Activated CD4-positive, alpha-beta memory T cell treated with anti-CD3 and anti-CD28 coated beads, Interleukin-2, amount 10 ng/mL, durations not matched to agents 7 days and 5 days (primary cell): ENCODE measurements at regions of chrX and their contacts with region 1.

Region 1: DNA sequence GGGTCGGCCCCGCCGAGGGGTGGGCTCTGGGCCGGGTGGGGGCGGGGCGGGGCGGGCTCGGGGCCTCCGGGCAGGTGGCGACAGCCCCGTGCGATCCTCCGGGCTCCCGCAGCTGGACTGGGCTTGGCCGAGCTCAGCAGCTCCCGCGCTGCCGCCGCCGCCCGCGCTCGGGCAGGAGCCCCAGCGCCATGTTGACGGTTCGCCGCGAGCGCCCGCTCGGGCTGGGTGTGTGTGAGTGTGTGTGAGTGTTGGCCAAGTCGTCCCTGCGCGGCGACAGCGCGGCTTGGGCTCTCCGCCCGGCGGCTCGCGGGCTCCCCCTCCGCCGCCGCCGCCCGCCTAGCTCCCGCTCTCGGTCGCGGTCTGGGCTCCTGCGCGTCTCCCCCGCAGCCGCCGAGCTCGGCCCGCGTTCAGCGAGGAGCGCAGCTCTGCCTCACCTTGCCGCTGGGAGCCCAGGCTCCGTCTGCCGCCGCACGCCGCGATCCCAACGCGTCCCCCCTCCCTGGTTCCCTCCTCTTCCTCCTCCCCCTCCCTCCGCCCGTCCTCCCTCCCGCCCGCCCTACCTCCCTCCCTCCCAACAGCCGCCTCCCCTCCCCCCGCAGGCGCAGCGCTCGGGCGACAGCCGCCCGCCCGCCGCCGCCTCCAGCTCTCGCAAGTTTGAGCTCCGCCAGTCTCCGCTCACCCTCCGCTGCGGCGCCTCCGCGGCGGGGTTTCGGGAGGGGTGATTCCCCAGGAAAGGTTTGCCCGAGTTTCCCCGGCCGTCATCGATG is at the start of gene BCOR:
- DNase-seq: peak; percentile 81
- H3K4me3 Mint-ChIP-seq: peak within 1 kb of the TSS; percentile 92
- H3K27ac Mint-ChIP-seq: peak within 1 kb of the TSS; percentile 90
- H3K4me1 Mint-ChIP-seq: peaks cover 22% of the 10 kb centered on the region
- H3K27me3 Mint-ChIP-seq: no peaks in the 10 kb centered on the region
- total RNA-seq, gene BCOR: 46.6 to 46.8 TPM

Region 2: DNA sequence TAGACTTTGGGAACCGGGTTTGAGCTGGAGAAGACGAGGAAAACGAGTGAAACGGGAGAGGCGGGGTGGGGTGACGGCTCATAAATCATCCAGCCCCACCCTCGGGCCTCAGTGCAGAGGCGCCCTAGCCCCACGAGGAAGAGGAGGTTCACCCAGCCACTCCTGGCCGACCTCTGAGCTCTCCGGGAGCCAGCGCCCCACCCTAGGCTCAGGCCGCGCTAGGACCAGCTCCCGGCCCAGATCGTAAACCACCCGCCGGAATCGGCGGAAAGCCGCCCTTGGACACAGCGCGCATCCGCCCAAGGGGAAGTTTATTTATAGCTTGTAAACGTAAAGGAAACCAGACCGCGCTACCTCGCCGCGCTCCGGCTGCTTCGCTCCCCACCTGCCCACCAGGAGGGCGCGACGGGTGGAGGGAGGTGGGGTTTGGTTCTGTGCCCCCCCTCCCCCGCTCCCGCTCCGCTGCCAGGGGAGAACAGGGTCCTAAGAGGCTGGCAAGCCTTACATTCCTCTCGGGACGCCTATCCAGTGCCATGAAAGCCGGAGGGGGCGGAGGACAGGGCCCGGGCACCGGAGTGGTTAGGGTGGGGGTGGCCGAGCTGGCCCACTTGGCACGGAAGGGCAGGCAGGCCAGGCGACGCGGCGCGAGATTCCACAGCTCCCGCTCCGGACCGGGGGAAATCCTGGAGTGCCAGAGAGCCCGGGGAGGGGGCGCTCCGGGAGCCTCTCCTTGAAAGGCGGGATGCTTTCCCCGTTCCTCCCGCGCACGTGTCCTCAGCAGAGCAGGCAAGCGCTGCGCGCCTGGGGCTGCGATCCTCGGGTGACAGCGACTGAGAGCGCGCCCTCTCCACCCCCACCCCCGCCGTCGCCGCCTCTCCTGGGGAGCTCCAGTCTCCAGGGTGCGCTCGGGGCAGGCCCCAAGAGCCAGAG is 84.1 kb before region 1 on chrX:
- CTCF ChIA-PET with region 1: interaction called, 3 read pairs
- POLR2A ChIA-PET with region 1: interaction called, 22 read pairs
- DNase-seq: peak; percentile 60
- H3K4me3 Mint-ChIP-seq: peak overlapping the region; percentile 73
- H3K27ac Mint-ChIP-seq: peak overlapping the region; percentile 64
- H3K4me1 Mint-ChIP-seq: peaks cover 31% of the 10 kb centered on the region
- H3K27me3 Mint-ChIP-seq: peaks cover 24% of the 10 kb centered on the region

Region 3: DNA sequence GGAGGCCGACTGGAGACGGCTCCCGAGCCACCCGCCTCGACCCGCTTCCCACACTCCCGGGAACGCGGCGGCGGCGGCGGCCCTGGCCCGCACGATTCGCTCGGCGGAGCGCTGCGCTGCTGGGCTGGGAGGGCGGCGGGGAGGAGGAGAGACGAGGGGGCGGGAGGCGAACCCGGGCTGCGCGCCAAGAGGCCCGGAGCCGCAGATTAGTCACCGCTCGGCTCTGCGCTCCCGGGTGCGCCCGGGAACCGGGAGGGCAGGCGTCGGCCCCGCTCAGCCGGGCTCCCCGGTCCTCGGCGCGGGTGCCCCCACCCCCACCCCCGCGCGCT is 11.2 kb after region 1 on chrX:
- CTCF ChIA-PET with region 1: interaction called, 3 read pairs
- POLR2A ChIA-PET with region 1: interaction called, 83 read pairs
- DNase-seq: peak; percentile 66
- H3K4me3 Mint-ChIP-seq: peak overlapping the region; percentile 51
- H3K27ac Mint-ChIP-seq: no peak overlapping the region
- H3K4me1 Mint-ChIP-seq: peaks cover 18% of the 10 kb centered on the region
- H3K27me3 Mint-ChIP-seq: peaks cover 3% of the 10 kb centered on the region

Region 4: DNA sequence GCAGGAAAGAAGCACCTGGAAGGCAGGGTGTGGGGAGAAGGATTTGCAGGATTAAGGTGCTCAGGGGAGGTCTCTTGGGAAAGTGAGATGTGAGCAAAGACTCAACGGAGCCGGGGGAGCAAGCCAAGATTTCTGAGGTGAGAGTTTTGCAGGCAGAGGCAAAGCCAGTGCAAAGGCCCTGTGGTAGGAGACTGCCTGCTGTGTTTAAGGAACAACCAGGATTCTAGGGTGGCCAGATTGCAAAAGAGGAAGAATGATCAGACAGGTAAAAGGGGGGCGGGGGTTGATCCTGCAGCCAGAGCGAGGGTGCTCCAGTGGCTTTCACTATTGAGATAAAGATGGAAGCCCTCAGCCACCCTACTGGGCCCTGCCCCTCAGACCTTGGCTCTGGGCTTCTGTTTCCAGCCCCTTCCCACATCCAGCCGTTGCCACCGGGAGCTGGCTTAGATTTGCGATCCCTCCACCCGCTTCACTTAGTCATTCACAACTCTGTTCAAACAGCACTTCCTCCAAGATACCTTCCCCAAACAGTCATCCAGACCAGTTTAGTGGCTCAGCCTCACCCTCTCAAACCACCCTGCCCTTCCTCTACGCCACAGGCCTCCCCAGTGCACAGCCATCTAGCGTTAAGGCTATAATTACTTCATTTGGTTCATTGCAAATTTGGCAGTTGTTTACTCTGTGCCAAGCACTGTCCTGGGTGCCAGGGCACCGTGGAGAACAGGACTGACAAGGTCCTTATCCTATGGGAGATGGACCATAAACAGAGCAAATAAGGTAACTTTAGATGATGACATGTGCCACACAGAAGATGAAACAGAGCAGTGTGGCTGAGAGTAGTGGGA is 23.4 kb after region 1 on chrX:
- CTCF ChIA-PET with region 1: no interaction called
- POLR2A ChIA-PET with region 1: no interaction called
- DNase-seq: no peak
- H3K4me3 Mint-ChIP-seq: no peak overlapping the region
- H3K27ac Mint-ChIP-seq: no peak overlapping the region
- H3K4me1 Mint-ChIP-seq: peaks cover 9% of the 10 kb centered on the region
- H3K27me3 Mint-ChIP-seq: no peaks in the 10 kb centered on the region

Region 5: GRCh38 chrX:40153335-40154249 is 55.9 kb after region 1 on chrX:
- CTCF ChIA-PET with region 1: interaction called, 5 read pairs
- POLR2A ChIA-PET with region 1: interaction called, 37 read pairs
- DNase-seq: peak; percentile 61
- H3K4me3 Mint-ChIP-seq: peak overlapping the region; percentile 75
- H3K27ac Mint-ChIP-seq: peak overlapping the region; percentile 40
- H3K4me1 Mint-ChIP-seq: peaks cover 21% of the 10 kb centered on the region
- H3K27me3 Mint-ChIP-seq: no peaks in the 10 kb centered on the region

Region 6: GRCh38 chrX:40169193-40170101 is 71.8 kb after region 1 on chrX:
- CTCF ChIA-PET with region 1: interaction called, 19 read pairs
- POLR2A ChIA-PET with region 1: interaction called, 387 read pairs
- DNase-seq: peak; percentile 88
- H3K4me3 Mint-ChIP-seq: peak overlapping the region; percentile 83
- H3K27ac Mint-ChIP-seq: peak overlapping the region; percentile 97
- H3K4me1 Mint-ChIP-seq: peaks cover 55% of the 10 kb centered on the region
- H3K27me3 Mint-ChIP-seq: no peaks in the 10 kb centered on the region